ENCODE measurements at regions of chr1 and their contacts with region 1.

Region 1: DNA sequence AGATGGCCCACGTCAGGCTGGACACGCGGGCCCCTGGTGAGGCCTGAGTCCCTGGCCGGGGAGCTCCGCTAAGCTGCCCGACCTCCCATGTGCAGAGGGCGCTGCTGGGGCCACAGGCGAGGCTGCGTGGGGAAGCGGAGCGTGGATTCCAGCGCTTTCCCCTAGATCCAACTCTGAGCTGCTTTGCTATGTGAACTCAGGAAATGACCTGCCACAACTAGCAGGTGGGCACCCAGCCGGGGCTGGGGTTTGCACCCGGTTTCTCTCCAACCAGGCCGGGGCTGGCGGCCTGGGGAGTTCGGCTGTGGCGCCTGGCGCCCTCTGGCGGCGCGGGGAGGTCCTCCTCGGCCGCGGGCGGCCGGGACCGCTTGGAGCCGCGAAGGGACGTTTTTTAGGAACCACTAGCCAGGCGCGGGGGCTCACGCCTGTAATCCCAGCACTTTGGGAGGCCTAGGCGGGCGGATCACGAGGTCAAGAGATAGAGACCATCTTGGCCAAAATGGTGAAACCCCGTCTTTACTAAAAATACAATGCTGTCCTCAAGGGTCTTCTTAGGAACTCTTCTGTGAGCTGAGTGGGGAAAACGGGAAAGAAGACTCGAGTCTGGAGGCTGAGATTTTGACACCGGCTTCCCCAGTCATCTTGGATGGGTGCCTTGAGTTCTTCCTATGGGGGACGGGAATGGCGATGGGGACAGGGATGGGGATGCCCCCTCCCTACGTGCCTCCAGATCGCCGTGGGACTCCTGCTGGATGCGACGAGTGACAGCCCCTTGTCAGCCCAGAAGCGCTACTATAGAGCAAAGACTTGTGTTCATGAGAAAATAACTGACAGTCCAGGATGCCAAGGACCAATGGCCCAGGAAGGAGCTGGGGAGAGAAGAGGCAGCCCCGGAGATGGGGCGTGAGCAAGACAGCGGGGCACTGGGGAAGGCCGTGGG is 12.6 kb downstream of the PYCR2 start:
- DNase-seq: peak; percentile 59
- H3K4me3 Mint-ChIP-seq: no peak overlapping the region
- H3K27ac Mint-ChIP-seq: no peak overlapping the region
- H3K4me1 Mint-ChIP-seq: peaks cover 16% of the 10 kb centered on the region
- H3K27me3 Mint-ChIP-seq: peaks cover 2% of the 10 kb centered on the region

Region 2: GRCh38 chr1:225554216-225554812 is 357.1 kb before region 1 on chr1:
- intact Hi-C with region 1: loop called (anchors 1 kb)
- DNase-seq: no peak
- H3K4me3 Mint-ChIP-seq: no peak overlapping the region
- H3K27ac Mint-ChIP-seq: no peak overlapping the region
- H3K4me1 Mint-ChIP-seq: no peaks in the 10 kb centered on the region
- H3K27me3 Mint-ChIP-seq: peaks cover 8% of the 10 kb centered on the region

Region 3: DNA sequence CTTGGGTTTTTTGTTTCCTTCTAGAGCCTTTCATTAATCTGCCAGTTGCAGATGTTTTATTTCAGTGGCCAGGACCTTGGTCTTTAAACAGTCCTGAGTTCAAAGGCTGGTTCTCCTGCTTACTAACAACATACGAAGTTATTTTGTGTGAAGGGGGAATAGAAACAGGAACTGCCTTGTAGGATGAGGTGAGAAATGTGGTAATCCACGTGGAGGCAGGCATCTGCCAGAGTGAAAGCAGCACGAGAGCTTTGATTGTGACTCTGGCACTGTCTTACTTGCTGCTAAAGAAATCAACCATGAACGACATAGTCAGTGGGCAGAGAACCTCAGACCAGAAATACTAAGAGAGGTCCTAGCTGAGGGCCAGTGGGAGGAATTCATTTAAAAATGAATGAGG is 59.7 kb before region 1 on chr1:
- intact Hi-C with region 1: loop called (anchors 5 kb)
- DNase-seq: no peak
- H3K4me3 Mint-ChIP-seq: no peak overlapping the region
- H3K27ac Mint-ChIP-seq: no peak overlapping the region
- H3K4me1 Mint-ChIP-seq: peaks cover 22% of the 10 kb centered on the region
- H3K27me3 Mint-ChIP-seq: no peaks in the 10 kb centered on the region